Naive thymus-derived CD8-positive, alpha-beta T cell (primary cell): ENCODE measurements at regions of chr9 and their contacts with region 1.

Region 1: GRCh38 chr9:127770905-127771569 is 7.4 kb downstream of the SH2D3C start:
- DNase-seq: peak; percentile 85 to 97 (median 91)
- ATAC-seq: peak; percentile 79 to 82
- H3K4me3 Mint-ChIP-seq: peak overlapping the region; percentile 83 to 94 (median 89)
- H3K27ac Mint-ChIP-seq: peak overlapping the region; percentile 93 to 98 (median 95)
- H3K4me1 Mint-ChIP-seq: peaks cover 40 to 85% (median 77%) of the 10 kb centered on the region in 4 donors
- H3K27me3 Mint-ChIP-seq: no peaks in the 10 kb centered on the region

Region 2: GRCh38 chr9:127598839-127599548 is 172.0 kb before region 1 on chr9:
- POLR2A ChIA-PET with region 1: no interaction called
- DNase-seq: no peak
- ATAC-seq: no peak
- H3K4me3 Mint-ChIP-seq: no peak overlapping the region
- H3K27ac Mint-ChIP-seq: peak overlapping the region in 1 of 10 donors; percentile 32
- H3K4me1 Mint-ChIP-seq: no peaks in the 10 kb centered on the region
- H3K27me3 Mint-ChIP-seq: peaks cover 0 to 6% (median 0%) of the 10 kb centered on the region in 5 donors

Region 3: GRCh38 chr9:127742435-127743088 is 28.5 kb before region 1 on chr9:
- POLR2A ChIA-PET with region 1: interaction called, 66 read pairs
- DNase-seq: no peak
- ATAC-seq: no peak
- H3K4me3 Mint-ChIP-seq: no peak overlapping the region
- H3K27ac Mint-ChIP-seq: peak overlapping the region in 3 of 10 donors; percentile 27 to 84 (median 39)
- H3K4me1 Mint-ChIP-seq: peaks cover 6 to 16% (median 11%) of the 10 kb centered on the region in 4 donors
- H3K27me3 Mint-ChIP-seq: no peaks in the 10 kb centered on the region

Region 4: DNA sequence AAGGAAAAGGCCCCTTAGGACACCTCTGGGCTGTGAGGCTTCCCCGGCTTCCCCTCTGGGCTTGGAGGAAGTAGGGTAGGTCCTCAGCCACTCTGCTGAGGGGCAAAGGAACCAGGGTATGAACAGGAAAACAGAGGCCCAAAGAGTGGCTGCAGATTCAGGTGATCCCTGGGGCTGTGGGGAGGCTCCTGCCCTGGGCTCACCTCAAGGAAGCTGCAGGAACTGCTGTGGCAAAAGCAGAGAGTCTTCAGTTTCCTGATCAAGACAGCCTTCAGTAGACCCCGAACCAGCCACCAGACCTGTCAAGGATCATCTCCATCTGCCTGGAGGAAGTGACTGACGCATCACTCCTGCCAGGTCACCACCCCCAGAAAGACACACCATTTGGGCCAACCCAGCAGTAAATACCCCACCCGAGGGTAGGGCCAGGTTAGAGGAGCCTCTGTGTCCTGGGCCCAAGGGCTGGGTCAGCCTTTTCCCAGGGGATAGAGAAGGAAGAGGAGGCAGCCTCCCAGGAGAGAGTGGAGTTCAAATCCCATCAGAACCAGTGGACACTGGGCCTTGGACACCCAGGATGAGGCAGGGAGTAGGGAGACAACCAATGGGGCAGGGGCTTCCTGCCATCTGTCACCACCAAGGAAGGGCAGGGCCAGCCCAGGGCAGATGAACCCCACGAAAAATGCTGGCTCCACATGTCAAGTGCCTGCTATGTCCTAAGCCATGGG is 134.1 kb after region 1 on chr9:
- POLR2A ChIA-PET with region 1: interaction called, 10 read pairs
- DNase-seq: peak; percentile 41 to 80 (median 63)
- ATAC-seq: peak; percentile 48 to 62
- H3K4me3 Mint-ChIP-seq: peak overlapping the region; percentile 82 to 99 (median 95)
- H3K27ac Mint-ChIP-seq: peak overlapping the region; percentile 98 to 100 (median 100)
- H3K4me1 Mint-ChIP-seq: peaks cover 19 to 61% (median 51%) of the 10 kb centered on the region in 4 donors
- H3K27me3 Mint-ChIP-seq: no peaks in the 10 kb centered on the region

Region 5: DNA sequence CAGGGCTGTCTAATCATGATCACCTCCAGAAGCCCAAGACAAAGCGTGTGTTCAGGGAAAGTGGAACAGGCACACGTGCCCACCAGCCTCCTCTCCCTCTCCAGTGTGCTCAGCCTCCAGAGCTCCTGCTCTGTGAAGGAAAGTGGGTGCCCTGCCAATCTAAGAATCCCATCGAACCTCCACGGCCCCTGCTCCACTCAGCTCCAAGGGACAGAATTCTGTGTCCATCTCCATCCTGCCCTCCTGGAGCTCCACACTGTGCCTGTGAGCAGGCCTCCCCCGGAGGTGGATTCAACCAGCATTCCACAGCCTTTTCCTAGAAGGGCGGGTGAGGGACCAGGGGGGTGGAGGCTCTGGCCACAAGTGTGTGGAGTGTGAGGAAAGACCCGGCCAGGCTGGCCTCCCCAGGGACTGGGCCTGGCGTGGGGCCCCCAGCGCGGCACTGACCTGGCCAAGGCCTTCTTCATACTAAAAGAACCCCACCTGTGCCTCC is 203.8 kb after region 1 on chr9:
- POLR2A ChIA-PET with region 1: no interaction called
- DNase-seq: no peak
- ATAC-seq: no peak
- H3K4me3 Mint-ChIP-seq: peak overlapping the region; percentile 87 to 99 (median 94)
- H3K27ac Mint-ChIP-seq: peak overlapping the region; percentile 92 to 100 (median 97)
- H3K4me1 Mint-ChIP-seq: peaks cover 35 to 83% (median 65%) of the 10 kb centered on the region in 4 donors
- H3K27me3 Mint-ChIP-seq: no peaks in the 10 kb centered on the region